ENCODE measurements at regions of chr5 and their contacts with region 1.

Region 1: GRCh38 chr5:15850939-15851341 is 328.7 kb downstream of the MARCHF11 start:
- DNase-seq: peak; percentile 97
- H3K4me3 ChIP-seq: peak overlapping the region in 1 of 3 experiments; percentile 49
- H3K27ac ChIP-seq: peak overlapping the region; percentile 80
- H3K4me1 ChIP-seq: peaks cover 37% of the 10 kb centered on the region
- H3K27me3 ChIP-seq: no peaks in the 10 kb centered on the region
- CTCF ChIP-seq: no peak
- POLR2A ChIP-seq: peak; percentile 37

Region 2: GRCh38 chr5:15807871-15808270 is 43.1 kb before region 1 on chr5:
- CTCF ChIA-PET with region 1: interaction called, 10 read pairs
- POLR2A ChIA-PET with region 1: no interaction called
- dilution Hi-C with region 1: no loop called
- intact Hi-C with region 1: no loop called
- DNase-seq: peak; percentile 90
- H3K4me3 ChIP-seq: no peak overlapping the region
- H3K27ac ChIP-seq: peak overlapping the region; percentile 35
- H3K4me1 ChIP-seq: peaks cover 15% of the 10 kb centered on the region
- H3K27me3 ChIP-seq: no peaks in the 10 kb centered on the region
- CTCF ChIP-seq: peak; percentile 33 to 47
- POLR2A ChIP-seq: no peak

Region 3: GRCh38 chr5:15834596-15835245 is 16.2 kb before region 1 on chr5:
- CTCF ChIA-PET with region 1: interaction called, 12 read pairs
- POLR2A ChIA-PET with region 1: no interaction called
- dilution Hi-C with region 1: no loop called
- intact Hi-C with region 1: loop called (anchors 1 kb)
- DNase-seq: peak; percentile 94
- H3K4me3 ChIP-seq: peak overlapping the region in 1 of 3 experiments; percentile 27
- H3K27ac ChIP-seq: peak overlapping the region; percentile 79
- H3K4me1 ChIP-seq: peaks cover 24% of the 10 kb centered on the region
- H3K27me3 ChIP-seq: no peaks in the 10 kb centered on the region
- CTCF ChIP-seq: no peak
- POLR2A ChIP-seq: no peak

Region 4: DNA sequence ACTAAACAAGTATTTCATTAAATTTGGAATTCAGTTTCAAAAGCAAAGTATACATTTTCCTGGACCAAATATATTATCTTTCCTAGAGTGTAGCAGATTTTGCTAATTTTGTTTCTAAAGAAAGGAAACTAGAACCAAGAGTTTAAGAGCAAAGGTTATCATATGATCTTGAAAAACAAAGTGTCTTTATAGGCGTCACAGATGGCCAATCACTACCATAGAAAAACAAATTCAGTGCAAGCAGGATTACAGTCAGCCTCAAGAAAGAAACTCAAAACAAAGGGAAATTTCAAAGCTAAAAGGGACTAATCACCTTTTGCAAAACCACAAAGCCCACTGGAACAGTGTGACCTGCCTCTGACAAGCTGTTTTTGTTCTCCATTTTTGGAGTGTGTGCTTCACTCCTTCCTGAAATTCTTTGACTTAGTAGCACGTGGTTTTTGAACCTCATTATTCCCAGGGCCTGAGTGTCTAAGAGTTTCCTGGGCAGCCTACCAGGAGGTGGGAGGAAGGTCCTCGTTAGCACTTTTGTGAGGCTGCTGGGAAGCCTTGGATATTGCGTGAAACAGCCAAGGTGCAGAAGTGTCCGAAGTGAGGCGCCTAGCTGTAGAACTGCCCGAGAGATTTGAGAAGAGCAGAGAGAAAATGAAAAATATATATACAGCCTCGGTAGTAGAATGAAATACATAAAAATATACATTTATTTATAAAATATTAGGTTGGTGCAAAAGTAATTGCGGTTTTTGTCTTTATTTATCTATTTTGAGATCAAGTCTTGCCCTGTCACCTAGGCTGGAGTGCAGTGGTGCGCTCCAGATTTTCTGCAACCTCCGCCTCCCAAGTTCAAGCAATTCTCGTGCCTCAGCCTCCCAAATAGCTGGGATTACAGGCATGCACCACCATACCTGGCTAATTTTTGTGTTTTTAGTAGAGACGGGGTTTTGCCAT is 82.6 kb after region 1 on chr5:
- CTCF ChIA-PET with region 1: interaction called, 3 read pairs
- POLR2A ChIA-PET with region 1: no interaction called
- dilution Hi-C with region 1: no loop called
- intact Hi-C with region 1: loop called (anchors 1 kb)
- DNase-seq: peak; percentile 87
- H3K4me3 ChIP-seq: no peak overlapping the region
- H3K27ac ChIP-seq: peak overlapping the region; percentile 63
- H3K4me1 ChIP-seq: peaks cover 20% of the 10 kb centered on the region
- H3K27me3 ChIP-seq: no peaks in the 10 kb centered on the region
- CTCF ChIP-seq: no peak
- POLR2A ChIP-seq: no peak

Measured in endothelial cell of umbilical vein (primary cell).